ENCODE measurements at regions of chr1 and their contacts with region 1.

Region 1: GRCh38 chr1:110209715-110210603 is at the start of gene KCNC4:
- DNase-seq: peak; percentile 91

Region 2: GRCh38 chr1:110087812-110088738 is 121.9 kb before region 1 on chr1:
- CTCF ChIA-PET with region 1: no interaction called
- POLR2A ChIA-PET with region 1: no interaction called
- DNase-seq: peak; percentile 84

Region 3: DNA sequence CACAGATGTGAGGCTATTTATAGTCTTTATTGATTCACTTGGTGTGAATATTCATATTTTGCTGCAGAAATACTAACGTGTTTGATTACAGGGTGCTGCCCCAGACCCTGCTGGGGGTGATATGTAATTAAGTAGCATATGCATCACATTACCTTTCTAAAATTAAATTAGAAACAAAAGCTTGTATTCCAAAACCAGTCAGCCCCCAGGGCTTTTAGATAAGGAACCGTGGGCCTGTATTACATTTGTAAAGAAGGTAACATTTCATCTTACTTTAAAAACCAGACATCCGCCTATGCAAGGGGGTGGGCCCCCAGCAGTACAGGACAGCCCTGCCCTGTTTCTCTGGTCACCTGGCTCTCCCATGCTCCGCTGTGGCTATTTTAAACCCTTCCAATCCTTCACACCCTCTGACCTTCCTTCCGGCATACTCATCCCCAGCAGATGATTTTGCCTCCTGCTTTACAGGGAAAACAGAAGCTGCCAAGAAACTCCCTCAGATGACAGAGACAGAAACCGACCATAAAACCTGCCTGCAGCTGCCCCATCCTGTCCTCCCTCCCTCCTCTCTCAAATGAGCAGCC is 21.8 kb before region 1 on chr1:
- CTCF ChIA-PET with region 1: interaction called, 11 read pairs
- POLR2A ChIA-PET with region 1: no interaction called
- DNase-seq: no peak

Region 4: GRCh38 chr1:110229348-110230001 is 19.5 kb after region 1 on chr1:
- CTCF ChIA-PET with region 1: no interaction called
- POLR2A ChIA-PET with region 1: no interaction called
- DNase-seq: no peak

Region 5: DNA sequence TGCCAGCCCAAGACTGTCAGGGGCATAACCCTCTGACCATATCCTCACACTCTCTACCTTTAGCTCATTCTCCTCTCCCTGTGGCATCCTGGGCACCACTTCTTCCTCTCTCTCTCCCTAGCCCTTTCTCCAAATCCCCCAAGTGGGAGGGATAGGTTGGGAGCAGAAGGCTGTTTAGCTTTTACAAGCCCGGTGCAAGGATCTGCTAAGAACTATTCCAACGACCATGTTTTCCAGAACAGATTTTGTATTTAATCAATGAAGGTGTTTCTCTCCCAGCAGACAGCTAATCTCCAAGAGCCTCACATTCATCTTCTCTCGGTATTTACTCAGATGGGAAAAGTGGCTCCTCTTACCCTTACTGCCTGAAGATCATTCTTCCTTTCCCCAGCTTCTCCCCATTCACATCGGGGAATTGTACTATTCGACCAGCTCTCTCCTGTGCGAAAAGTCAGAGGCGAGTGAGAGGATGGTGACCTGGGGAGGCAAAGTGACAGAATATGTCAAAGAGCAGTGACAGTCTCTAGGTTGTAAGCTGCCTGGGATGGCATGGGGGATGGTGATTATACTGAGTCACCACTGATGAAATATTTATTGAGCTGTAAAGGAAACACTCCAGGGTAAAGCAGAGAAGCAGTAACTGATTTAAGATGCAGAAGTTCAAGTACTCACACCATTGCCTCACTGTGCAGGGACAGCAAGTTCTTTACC is 82.2 kb after region 1 on chr1:
- CTCF ChIA-PET with region 1: interaction called, 4 read pairs
- POLR2A ChIA-PET with region 1: interaction called, 12 read pairs
- DNase-seq: peak; percentile 40

Region 6: DNA sequence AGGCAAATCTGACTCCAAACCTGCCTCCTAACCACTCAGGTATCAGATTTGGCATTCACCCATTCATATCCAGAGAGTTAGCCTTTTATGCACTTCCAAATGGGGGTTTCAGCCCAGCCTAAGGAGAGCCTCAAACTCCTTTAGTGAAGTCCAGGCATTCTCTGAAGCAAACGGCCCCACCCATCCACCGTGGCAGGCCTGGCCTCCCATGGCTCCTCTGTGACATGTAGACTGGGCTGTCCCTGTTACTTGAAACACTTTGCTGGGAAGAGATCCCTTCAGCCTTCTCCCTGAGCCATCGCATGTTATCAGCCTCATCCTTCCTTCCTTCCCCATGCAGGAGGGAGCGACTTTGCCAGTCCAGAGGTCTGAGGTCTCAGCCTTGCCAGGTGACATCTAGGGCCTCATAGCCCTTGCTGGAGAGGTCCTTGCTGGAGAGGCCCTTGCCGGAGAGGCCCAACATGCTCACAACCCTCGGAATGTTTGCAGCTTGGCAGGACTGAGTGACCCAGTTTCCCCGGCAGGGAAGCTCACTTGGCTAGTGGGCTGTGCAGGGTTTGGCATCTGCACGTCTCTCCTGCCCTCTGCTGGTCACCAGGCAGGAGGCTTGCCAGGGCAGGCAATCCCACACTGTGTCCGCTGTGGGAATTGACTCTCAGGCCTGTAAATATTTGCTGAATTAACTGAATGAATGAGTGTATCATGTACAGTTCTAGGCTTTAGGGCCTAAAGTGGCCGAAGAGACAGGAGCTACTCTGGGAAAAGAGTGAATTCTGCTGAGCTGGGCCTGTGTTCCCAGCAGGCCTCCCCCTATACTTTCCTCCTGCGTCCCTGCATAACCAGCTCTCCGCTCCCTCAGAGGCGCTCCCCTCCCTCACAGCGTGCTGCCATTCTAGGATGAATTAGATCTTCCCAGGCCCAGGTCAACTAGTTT is 102.5 kb after region 1 on chr1:
- CTCF ChIA-PET with region 1: interaction called, 382 read pairs
- POLR2A ChIA-PET with region 1: interaction called, 12 read pairs
- DNase-seq: peak; percentile 90

Region 7: DNA sequence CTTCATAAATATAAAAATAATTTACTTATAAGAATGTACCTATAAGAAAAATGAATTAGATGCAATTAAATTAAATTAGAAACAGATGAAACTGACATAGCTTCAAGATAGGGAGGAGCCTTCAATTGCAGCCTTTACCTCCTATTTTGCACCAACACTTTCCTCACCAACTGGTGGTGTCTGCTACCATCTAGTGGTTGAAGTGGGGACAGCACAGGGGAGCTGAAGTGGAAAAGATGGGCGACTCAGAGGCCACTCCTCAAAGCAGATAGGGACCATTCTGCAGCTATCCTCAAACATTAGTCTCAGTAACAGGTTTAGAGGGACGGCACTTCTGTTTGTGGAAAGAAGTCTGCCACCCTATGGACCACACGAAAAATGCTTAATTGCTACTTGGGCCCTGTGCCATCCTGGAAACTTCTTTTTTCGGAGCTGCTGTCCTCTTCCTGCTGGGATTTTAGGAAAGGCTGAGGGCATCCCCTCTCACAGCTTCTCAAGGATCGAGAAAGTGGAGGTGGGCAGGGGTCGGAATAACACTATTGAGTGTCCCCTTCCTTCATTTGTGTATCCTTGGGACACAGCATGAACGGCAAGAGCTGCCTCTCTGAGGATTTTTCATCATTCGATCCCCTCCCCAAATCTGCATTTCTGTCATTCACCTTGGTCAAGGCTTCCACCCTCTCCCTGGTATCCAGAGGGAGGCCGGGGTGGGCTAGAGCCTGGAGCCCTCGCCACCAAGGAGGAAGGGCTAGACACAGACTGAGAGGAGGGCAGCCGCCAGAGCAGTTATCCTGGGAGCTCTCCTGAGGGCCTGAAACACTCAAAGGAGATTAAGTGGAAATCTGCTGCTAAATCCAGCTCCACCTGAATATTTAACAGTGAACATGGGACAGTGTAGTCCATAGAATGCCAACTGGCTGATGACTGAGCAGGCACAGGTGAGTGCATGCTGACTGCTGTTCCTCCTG is 250.6 kb after region 1 on chr1:
- CTCF ChIA-PET with region 1: interaction called, 64 read pairs
- POLR2A ChIA-PET with region 1: interaction called, 11 read pairs
- DNase-seq: peak; percentile 86